Common myeloid progenitor, CD34-positive (primary cell): ENCODE measurements at regions of chr5 and their contacts with region 1.

Region 1: DNA sequence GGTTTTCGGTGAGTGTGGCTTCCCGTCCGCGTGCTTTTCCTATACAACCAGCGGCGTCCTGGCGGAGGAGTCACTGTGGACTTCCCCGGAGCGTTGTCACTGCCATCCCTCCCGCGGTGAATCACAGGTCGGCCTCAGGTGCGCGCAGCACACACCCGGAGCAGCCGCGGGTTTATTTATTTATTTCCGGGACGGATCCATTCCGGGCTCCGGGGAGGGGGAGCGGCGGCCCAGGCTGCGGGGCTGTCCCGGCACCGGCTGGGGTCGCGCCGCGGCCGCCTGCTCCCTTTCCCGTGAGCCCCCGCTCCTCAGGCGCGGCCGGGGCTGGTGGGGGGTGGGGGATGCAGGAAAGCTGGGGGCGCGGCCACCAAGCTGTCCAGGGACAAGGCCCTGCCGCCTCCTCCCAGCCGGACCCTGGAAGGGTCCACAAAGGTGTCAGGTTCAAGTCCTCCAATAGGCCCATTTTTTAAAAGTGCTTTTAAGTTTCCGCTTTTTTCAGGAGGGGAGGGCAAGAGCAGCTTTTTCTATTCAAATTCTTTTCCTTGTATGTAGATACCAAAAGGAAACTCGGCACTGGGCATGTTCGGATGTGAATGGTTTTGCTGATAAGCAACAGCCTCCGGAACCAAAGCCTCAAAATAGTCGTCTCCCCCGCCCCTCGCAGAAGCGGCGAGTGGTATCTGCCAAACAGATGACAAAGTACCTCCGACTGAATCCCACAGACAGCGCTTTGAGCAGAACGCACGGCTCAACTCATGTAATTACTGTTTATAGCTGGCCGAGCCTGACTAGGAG is 192.5 kb downstream of the CD180 start:
- DNase-seq: peak; percentile 99 to 100 (median 99)
- H3K4me3 ChIP-seq: peak overlapping the region; percentile 45 to 89 (median 75)
- H3K27ac ChIP-seq: peak overlapping the region; percentile 81 to 94
- H3K4me1 ChIP-seq: peaks cover 24 to 61% (median 33%) of the 10 kb centered on the region in 4 experiments
- H3K27me3 ChIP-seq: no peaks in the 10 kb centered on the region

Region 2: DNA sequence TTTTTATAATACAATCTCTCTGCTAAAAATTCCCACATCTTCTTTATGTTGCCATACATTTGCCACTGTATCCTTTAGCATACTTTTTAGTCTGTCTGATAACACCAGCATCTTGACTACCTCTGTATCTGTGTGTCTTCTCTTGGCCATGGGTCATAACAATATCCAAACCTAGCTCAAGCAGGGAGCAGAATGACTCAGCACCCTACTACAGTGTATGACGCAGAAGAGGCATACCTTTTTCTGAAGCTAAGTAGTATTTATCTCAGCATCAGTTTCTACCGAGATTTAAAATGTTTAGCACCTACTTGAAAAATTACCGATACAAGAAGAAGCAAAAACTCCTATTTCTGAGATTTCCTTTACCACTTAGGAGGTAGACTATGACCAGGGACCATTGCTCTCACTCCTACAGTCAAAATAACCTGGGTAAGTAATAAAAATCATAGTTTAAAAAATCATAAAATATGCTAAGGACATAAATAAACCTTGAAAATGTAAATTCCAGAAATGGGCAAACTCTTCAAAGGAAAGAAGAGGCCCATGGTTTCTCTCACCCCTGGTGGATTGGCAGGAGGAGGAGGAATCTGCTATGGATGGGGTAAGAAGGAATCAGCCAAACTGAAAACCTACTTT is 121.4 kb before region 1 on chr5:
- CTCF ChIA-PET with region 1: no interaction called
- POLR2A ChIA-PET with region 1: no interaction called
- DNase-seq: peak in 1 of 3 donors; percentile 13
- H3K4me3 ChIP-seq: no peak overlapping the region
- H3K27ac ChIP-seq: no peak overlapping the region
- H3K4me1 ChIP-seq: no peaks in the 10 kb centered on the region
- H3K27me3 ChIP-seq: no peaks in the 10 kb centered on the region

Region 3: GRCh38 chr5:66987949-66988838 is 15.9 kb before region 1 on chr5:
- CTCF ChIA-PET with region 1: interaction called, 10 read pairs
- POLR2A ChIA-PET with region 1: interaction called, 6 read pairs
- DNase-seq: peak; percentile 36 to 70 (median 65)
- H3K4me3 ChIP-seq: no peak overlapping the region
- H3K27ac ChIP-seq: no peak overlapping the region
- H3K4me1 ChIP-seq: peaks cover 0 to 13% (median 7%) of the 10 kb centered on the region in 4 experiments
- H3K27me3 ChIP-seq: no peaks in the 10 kb centered on the region

Region 4: GRCh38 chr5:67015541-67016191 is 11.5 kb after region 1 on chr5:
- CTCF ChIA-PET with region 1: interaction called, 15 read pairs
- POLR2A ChIA-PET with region 1: interaction called, 3 read pairs
- DNase-seq: peak in 2 of 3 donors; percentile 44 to 67
- H3K4me3 ChIP-seq: peak overlapping the region in 4 of 7 experiments; percentile 24 to 66 (median 54)
- H3K27ac ChIP-seq: peak overlapping the region; percentile 6 to 45
- H3K4me1 ChIP-seq: peaks cover 17 to 63% (median 29%) of the 10 kb centered on the region in 4 experiments
- H3K27me3 ChIP-seq: no peaks in the 10 kb centered on the region

Region 5: DNA sequence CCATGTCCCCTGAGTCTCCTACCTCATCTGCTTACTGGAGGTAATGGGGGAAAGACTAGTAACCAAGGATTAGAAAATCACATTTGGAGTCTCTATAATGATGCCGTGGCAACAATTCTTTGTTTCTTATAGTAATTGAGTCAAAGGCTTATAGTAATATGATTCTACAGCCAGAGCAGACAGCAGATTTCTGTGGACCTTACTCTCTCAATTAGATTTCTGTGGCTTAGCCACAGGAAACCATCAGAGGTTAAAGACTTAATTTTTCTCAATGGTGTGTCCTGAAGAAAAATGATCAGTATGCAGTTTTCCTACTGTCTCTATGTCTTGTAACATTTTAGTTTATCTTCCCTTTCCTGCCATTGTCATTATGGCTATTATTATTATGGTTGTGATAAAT is 251.7 kb after region 1 on chr5:
- CTCF ChIA-PET with region 1: no interaction called
- POLR2A ChIA-PET with region 1: no interaction called
- DNase-seq: no peak
- H3K4me3 ChIP-seq: no peak overlapping the region
- H3K27ac ChIP-seq: no peak overlapping the region
- H3K4me1 ChIP-seq: no peaks in the 10 kb centered on the region
- H3K27me3 ChIP-seq: no peaks in the 10 kb centered on the region